A673 (cell line): ENCODE measurements at regions of chr3 and their contacts with region 1.

Region 1: DNA sequence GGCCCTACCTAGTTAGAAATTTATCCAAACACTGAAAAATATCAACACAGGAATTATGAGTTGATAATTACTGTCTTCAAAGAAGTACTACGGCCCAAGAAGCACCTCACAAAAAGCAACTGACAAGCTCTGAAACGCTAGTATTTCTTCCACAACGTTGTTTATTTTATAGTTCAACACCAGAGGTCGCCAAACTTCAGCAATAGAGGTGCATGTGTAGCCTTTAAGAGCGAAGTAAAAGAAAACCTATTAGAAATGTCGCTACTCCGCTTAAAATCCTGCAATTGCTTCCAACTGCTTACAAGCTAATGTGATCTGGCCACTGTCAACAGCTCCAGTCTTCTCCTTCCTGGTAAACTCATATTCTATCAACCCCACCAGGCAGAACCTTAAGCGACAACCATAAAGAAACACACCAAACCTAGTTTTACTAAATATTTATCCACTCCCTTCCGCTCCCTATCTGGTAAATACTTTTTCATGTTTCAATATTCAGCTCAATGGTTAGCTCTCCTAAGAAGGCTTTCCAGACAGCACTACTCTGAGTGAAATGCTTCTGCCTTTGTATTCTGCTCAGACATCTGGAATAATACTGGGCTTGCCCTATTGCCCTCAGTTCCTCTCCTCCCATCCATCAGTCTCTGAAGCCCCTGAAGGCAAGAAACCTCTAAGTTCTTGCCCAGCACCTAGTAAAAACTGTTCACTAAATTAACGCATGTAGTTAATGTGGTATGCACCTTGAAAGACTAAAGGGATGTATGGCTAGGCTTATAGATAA is 110.2 kb downstream of the NR1I2 start:
- DNase-seq: peak; percentile 83
- H3K4me3 ChIP-seq: no peak overlapping the region
- H3K27ac ChIP-seq: no peak overlapping the region
- H3K4me1 ChIP-seq: no peaks in the 10 kb centered on the region
- H3K27me3 ChIP-seq: no peaks in the 10 kb centered on the region
- CTCF ChIP-seq: peak; percentile 78

Region 2: DNA sequence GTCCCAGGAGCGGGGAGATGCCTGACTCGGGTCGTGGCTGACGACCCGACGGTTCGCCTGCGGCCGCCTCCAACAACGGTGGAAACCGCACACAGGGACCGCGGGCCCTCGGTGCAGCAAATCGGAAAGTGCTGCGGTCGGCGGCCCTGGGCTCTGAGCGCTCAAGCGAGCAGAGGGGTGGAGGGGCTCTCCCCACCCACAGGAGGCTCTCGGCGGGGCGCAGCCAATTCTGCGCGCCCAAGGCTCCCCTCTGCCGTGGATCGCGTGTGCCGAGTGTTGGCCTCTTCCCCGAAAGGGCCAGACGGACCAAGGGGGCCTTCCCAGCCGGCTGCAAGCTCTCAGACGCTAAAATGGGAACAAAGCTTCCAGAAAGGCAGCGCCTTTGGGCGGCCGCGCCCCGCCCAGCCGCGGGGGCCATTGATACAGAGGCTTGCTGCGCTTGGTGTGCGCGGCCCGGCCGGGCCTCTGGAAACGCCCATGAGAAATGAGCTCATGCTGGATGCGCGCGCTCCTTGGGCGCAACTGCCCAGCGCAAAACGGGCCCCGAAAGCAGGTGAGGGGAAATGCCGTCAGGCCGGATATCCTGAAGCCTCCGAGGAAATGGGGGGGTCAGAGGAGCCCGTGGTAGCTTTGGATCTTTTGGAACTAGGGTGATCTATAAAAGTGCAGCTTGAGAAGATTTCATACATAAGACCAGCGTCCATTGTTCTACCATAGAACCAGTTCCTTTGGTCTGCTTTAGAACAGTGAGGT is 203.3 kb after region 1 on chr3:
- CTCF ChIA-PET with region 1: interaction called, 5 read pairs
- POLR2A ChIA-PET with region 1: no interaction called
- intact Hi-C with region 1: loop called (anchors 5 kb)
- DNase-seq: peak; percentile 94
- H3K4me3 ChIP-seq: peak overlapping the region; percentile 81
- H3K27ac ChIP-seq: peak overlapping the region; percentile 99
- H3K4me1 ChIP-seq: peaks cover 7% of the 10 kb centered on the region
- H3K27me3 ChIP-seq: no peaks in the 10 kb centered on the region
- CTCF ChIP-seq: no peak

Region 3: GRCh38 chr3:120198305-120198878 is 306.3 kb after region 1 on chr3:
- CTCF ChIA-PET with region 1: no interaction called
- POLR2A ChIA-PET with region 1: no interaction called
- intact Hi-C with region 1: loop called (anchors 5 kb)
- DNase-seq: peak; percentile 53
- H3K4me3 ChIP-seq: no peak overlapping the region
- H3K27ac ChIP-seq: no peak overlapping the region
- H3K4me1 ChIP-seq: peaks cover 21% of the 10 kb centered on the region
- H3K27me3 ChIP-seq: no peaks in the 10 kb centered on the region
- CTCF ChIP-seq: peak; percentile 41; the same call in 1 of the 2 replicates